Naive thymus-derived CD4-positive, alpha-beta T cell (primary cell): ENCODE measurements at regions of chr10 and their contacts with region 1.

Region 1: GRCh38 chr10:122980209-122981065 is at the start of gene PSTK:
- DNase-seq: peak; percentile 84 to 90 (median 88)
- ATAC-seq: peak; percentile 97
- H3K4me3 ChIP-seq: peak within 1 kb of the TSS; percentile 67
- H3K4me3 Mint-ChIP-seq: peak within 1 kb of the TSS; percentile 87 to 95 (median 91)
- H3K27ac ChIP-seq: peak within 1 kb of the TSS; percentile 89
- H3K27ac Mint-ChIP-seq: peak within 1 kb of the TSS; percentile 89 to 98 (median 96)
- H3K4me1 ChIP-seq: peaks cover 7 to 14% of the 10 kb centered on the region in 2 donors
- H3K4me1 Mint-ChIP-seq: peaks cover 15 to 29% (median 24%) of the 10 kb centered on the region in 7 donors
- H3K27me3 ChIP-seq: no peaks in the 10 kb centered on the region
- H3K27me3 Mint-ChIP-seq: peaks cover 0 to 13% (median 0%) of the 10 kb centered on the region in 5 donors
- total RNA-seq, gene PSTK: 4.3 to 13.2 (median 5.9) TPM

Region 2: DNA sequence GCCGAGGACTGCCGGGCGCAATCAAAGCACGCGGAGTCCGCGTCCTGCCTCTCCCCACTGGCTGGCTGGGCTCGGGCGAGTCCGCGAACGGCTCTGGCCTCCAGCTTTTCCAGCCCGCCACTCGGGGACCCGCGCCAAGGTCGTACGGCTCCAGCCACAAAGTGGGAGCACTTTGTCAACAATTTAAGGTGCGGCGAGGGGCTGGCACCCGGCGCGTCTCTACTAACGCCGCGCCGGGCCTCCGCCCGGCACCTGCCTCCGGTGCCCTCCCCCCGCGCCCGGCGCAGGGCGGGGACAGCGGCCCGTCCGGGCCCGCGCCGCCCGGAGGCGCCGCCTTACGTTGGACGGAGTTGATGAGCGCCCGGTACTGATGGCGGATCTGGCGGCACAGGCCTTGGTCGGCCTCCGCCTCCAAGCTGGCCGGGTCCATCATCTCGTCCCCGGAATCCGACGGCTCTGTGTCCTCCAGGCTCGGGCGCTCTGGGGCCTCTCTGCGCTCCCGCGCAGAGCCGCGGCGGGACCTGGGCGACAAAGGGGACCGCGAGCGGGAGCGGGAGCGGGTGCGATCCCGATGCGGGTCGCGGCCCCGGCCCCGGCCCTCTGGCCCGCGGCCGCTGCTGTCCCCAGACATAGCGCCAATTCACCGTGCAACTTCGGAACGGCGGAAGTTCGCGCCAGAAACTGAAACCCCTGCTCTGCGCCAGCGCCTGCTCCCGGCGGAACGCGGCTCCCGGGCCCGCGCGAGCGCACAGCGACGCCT is 1005.7 kb before region 1 on chr10 and contains the start of gene NSMCE4A:
- CTCF ChIA-PET with region 1: no interaction called
- POLR2A ChIA-PET with region 1: no interaction called
- intact Hi-C with region 1: loop called in 1 of 2 experiments (anchors 10 kb)
- DNase-seq: peak; percentile 47 to 81 (median 62)
- ATAC-seq: peak; percentile 90
- H3K4me3 ChIP-seq: peak within 1 kb of the TSS; percentile 86
- H3K4me3 Mint-ChIP-seq: peak within 1 kb of the TSS; percentile 72 to 86 (median 81)
- H3K27ac ChIP-seq: peak within 1 kb of the TSS; percentile 74
- H3K27ac Mint-ChIP-seq: peak within 1 kb of the TSS in 6 of 9 donors; percentile 36 to 77 (median 60)
- H3K4me1 ChIP-seq: peaks cover 6 to 11% of the 10 kb centered on the region in 2 donors
- H3K4me1 Mint-ChIP-seq: peaks cover 15 to 35% (median 22%) of the 10 kb centered on the region in 7 donors
- H3K27me3 ChIP-seq: no peaks in the 10 kb centered on the region
- H3K27me3 Mint-ChIP-seq: no peaks in the 10 kb centered on the region
- total RNA-seq, gene NSMCE4A: 34.7 to 87.2 (median 69.4) TPM

Region 3: GRCh38 chr10:122267849-122268737 is 712.3 kb before region 1 on chr10:
- CTCF ChIA-PET with region 1: no interaction called
- POLR2A ChIA-PET with region 1: no interaction called
- intact Hi-C with region 1: no loop called
- DNase-seq: peak in 5 of 9 donors; percentile 15 to 52 (median 22)
- ATAC-seq: peak; percentile 78
- H3K4me3 ChIP-seq: no peak overlapping the region
- H3K4me3 Mint-ChIP-seq: no peak overlapping the region
- H3K27ac ChIP-seq: no peak overlapping the region
- H3K27ac Mint-ChIP-seq: no peak overlapping the region
- H3K4me1 ChIP-seq: no peaks in the 10 kb centered on the region
- H3K4me1 Mint-ChIP-seq: peaks cover 0 to 4% (median 0%) of the 10 kb centered on the region in 7 donors
- H3K27me3 ChIP-seq: no peaks in the 10 kb centered on the region
- H3K27me3 Mint-ChIP-seq: peaks cover 0 to 38% (median 33%) of the 10 kb centered on the region in 5 donors

Region 4: GRCh38 chr10:122879339-122880273 is 100.8 kb before region 1 on chr10 and contains the start of gene FAM24B:
- CTCF ChIA-PET with region 1: no interaction called
- POLR2A ChIA-PET with region 1: interaction called, 3 read pairs
- intact Hi-C with region 1: loop called in 1 of 2 experiments (anchors 1 kb)
- DNase-seq: peak; percentile 84 to 96 (median 94)
- ATAC-seq: peak; percentile 93
- H3K4me3 ChIP-seq: peak within 1 kb of the TSS; percentile 81
- H3K4me3 Mint-ChIP-seq: peak within 1 kb of the TSS; percentile 86 to 99 (median 92)
- H3K27ac ChIP-seq: peak within 1 kb of the TSS; percentile 77
- H3K27ac Mint-ChIP-seq: peak within 1 kb of the TSS; percentile 85 to 96 (median 92)
- H3K4me1 ChIP-seq: peaks cover 18 to 21% of the 10 kb centered on the region in 2 donors
- H3K4me1 Mint-ChIP-seq: peaks cover 31 to 65% (median 54%) of the 10 kb centered on the region in 7 donors
- H3K27me3 ChIP-seq: no peaks in the 10 kb centered on the region
- H3K27me3 Mint-ChIP-seq: no peaks in the 10 kb centered on the region
- total RNA-seq, gene FAM24B: 9.9 to 13.5 (median 11.4) TPM

Region 5: GRCh38 chr10:122953827-122954730 is 26.4 kb before region 1 on chr10 and contains the start of gene C10orf88:
- CTCF ChIA-PET with region 1: interaction called, 3 read pairs
- POLR2A ChIA-PET with region 1: interaction called, 16 read pairs
- intact Hi-C with region 1: loop called (anchors 1 kb)
- DNase-seq: peak; percentile 92 to 98 (median 97)
- ATAC-seq: peak; percentile 97
- H3K4me3 ChIP-seq: peak within 1 kb of the TSS; percentile 69
- H3K4me3 Mint-ChIP-seq: peak within 1 kb of the TSS; percentile 85 to 96 (median 90)
- H3K27ac ChIP-seq: peak within 1 kb of the TSS; percentile 72
- H3K27ac Mint-ChIP-seq: peak within 1 kb of the TSS; percentile 77 to 98 (median 90)
- H3K4me1 ChIP-seq: peaks cover 16% of the 10 kb centered on the region in 2 donors
- H3K4me1 Mint-ChIP-seq: peaks cover 26 to 60% (median 39%) of the 10 kb centered on the region in 7 donors
- H3K27me3 ChIP-seq: no peaks in the 10 kb centered on the region
- H3K27me3 Mint-ChIP-seq: peaks cover 0 to 14% (median 0%) of the 10 kb centered on the region in 5 donors
- total RNA-seq, gene C10orf88: 5.2 to 16.8 (median 12.5) TPM